B cell (primary cell): ENCODE measurements at regions of chr4 and their contacts with region 1.

Region 1: DNA sequence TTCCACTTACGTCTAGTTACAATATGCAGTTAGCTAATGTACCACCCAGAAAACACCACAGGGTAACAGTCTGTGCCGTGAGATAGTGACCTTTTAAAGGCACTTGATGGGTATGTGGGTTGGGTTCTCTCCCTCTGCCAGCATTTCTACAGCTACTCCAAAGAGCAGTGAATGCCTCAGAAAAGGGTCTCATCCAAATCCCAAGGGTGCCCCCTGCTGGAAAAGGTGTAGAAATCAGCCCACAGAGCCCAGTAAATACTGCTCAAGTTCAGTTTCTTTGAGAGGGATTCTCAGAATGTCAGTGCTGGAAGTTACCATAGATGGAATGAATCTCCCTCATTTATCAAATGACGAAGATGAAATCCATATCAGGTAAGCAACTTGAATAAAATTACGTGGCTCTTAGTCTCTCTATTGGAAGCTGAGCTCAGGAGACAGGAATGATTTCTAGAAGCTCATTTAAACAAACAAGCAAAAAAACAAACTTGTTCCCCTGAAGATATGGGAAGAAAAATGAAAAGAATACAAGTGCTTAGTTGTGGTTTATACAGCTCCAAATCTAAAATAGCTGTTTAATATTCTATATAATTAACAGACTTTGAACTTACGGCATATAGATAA is 9.5 kb downstream of the RNF175 start:
- DNase-seq: peak; percentile 75
- ATAC-seq: peak; percentile 68
- H3K4me3 ChIP-seq: no peak overlapping the region
- H3K4me3 Mint-ChIP-seq: no peak overlapping the region
- H3K27ac ChIP-seq: no peak overlapping the region
- H3K27ac Mint-ChIP-seq: no peak overlapping the region
- H3K4me1 ChIP-seq: peaks cover 0 to 10% of the 10 kb centered on the region in 2 donors
- H3K4me1 Mint-ChIP-seq: no peaks in the 10 kb centered on the region
- H3K27me3 ChIP-seq: peaks cover 0 to 10% (median 3%) of the 10 kb centered on the region in 4 experiments
- H3K27me3 Mint-ChIP-seq: peaks cover 9% of the 10 kb centered on the region
- CTCF ChIP-seq: peak; percentile 87

Region 2: GRCh38 chr4:153634738-153635353 is 115.5 kb before region 1 on chr4:
- CTCF ChIA-PET with region 1: interaction called, 36 read pairs
- POLR2A ChIA-PET with region 1: no interaction called
- intact Hi-C with region 1: loop called (anchors 1 kb)
- DNase-seq: peak; percentile 41
- ATAC-seq: no peak
- H3K4me3 ChIP-seq: no peak overlapping the region
- H3K4me3 Mint-ChIP-seq: no peak overlapping the region
- H3K27ac ChIP-seq: no peak overlapping the region
- H3K27ac Mint-ChIP-seq: no peak overlapping the region
- H3K4me1 ChIP-seq: no peaks in the 10 kb centered on the region
- H3K4me1 Mint-ChIP-seq: no peaks in the 10 kb centered on the region
- H3K27me3 ChIP-seq: no peaks in the 10 kb centered on the region
- H3K27me3 Mint-ChIP-seq: no peaks in the 10 kb centered on the region
- CTCF ChIP-seq: peak; percentile 79

Region 3: GRCh38 chr4:154143720-154144119 is 393.4 kb after region 1 on chr4:
- CTCF ChIA-PET with region 1: no interaction called
- POLR2A ChIA-PET with region 1: no interaction called
- intact Hi-C with region 1: no loop called
- DNase-seq: no peak
- ATAC-seq: no peak
- H3K4me3 ChIP-seq: no peak overlapping the region
- H3K4me3 Mint-ChIP-seq: no peak overlapping the region
- H3K27ac ChIP-seq: no peak overlapping the region
- H3K27ac Mint-ChIP-seq: no peak overlapping the region
- H3K4me1 ChIP-seq: no peaks in the 10 kb centered on the region
- H3K4me1 Mint-ChIP-seq: no peaks in the 10 kb centered on the region
- H3K27me3 ChIP-seq: no peaks in the 10 kb centered on the region
- H3K27me3 Mint-ChIP-seq: no peaks in the 10 kb centered on the region
- CTCF ChIP-seq: no peak